Right ventricle myocardium inferior (tissue), 1 donor: ENCODE measurements at regions of chr1 and their contacts with region 1.

Region 1: GRCh38 chr1:230922620-230923019 is 54.3 kb upstream of the C1orf198 start:
- DNase-seq: no peak
- ATAC-seq: no peak

Region 2: DNA sequence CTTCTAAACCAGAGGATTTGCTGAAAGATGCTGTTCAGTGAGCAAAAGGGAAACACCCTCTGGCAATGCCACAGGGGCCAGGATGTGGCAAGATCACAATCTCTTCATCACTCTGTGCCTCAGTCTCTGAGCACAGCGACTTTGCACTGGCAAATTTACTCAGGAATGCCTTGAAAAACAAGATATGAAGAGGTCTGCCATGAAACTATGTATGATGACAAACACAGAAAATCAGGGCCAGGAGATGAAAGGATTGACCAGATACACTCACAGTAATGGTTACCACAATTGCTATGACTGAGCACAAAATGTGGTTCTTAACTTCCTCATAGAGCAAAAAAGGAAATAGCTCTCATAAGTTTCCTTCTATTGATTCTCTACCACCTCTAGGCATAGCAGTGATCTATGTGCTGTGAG is 50.2 kb after region 1 on chr1:
- intact Hi-C with region 1: loop called (anchors 5 kb)
- DNase-seq: no peak
- ATAC-seq: no peak

Region 3: DNA sequence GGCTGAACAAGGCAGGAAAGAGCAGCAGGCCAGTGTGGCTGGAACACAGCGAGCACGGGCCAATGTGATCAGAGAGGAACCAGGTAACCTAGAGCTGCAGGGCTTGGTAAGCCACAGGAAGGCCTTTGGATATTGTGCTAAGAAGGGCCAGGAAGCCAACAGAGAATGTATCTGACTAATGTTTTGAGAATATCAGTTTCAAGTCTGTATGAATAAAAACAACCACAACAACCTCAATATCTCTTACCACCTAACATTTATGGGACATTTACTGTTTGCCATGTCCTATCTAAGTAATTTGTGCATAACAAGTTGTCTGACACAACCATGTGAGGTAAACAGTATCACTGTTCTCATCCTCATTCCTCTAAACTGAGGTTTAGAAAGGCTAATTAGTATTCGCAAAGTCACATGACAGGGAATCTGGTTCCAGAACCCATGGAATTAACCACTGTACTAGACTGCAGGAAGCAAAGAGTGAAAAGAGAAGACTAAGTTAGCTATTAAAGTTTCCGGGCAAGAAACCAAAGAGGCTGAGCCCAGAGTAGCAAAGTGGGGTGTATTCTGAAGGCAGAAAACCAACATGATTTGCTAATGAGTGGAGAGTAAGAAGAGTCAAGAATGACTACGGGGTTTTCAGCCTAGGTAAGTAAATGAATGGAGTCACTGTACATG is 454.4 kb after region 1 on chr1:
- intact Hi-C with region 1: no loop called
- DNase-seq: peak; percentile 48
- ATAC-seq: no peak